Right ventricle myocardium inferior (tissue), 1 donor: ENCODE measurements at regions of chr5 and their contacts with region 1.

Region 1: DNA sequence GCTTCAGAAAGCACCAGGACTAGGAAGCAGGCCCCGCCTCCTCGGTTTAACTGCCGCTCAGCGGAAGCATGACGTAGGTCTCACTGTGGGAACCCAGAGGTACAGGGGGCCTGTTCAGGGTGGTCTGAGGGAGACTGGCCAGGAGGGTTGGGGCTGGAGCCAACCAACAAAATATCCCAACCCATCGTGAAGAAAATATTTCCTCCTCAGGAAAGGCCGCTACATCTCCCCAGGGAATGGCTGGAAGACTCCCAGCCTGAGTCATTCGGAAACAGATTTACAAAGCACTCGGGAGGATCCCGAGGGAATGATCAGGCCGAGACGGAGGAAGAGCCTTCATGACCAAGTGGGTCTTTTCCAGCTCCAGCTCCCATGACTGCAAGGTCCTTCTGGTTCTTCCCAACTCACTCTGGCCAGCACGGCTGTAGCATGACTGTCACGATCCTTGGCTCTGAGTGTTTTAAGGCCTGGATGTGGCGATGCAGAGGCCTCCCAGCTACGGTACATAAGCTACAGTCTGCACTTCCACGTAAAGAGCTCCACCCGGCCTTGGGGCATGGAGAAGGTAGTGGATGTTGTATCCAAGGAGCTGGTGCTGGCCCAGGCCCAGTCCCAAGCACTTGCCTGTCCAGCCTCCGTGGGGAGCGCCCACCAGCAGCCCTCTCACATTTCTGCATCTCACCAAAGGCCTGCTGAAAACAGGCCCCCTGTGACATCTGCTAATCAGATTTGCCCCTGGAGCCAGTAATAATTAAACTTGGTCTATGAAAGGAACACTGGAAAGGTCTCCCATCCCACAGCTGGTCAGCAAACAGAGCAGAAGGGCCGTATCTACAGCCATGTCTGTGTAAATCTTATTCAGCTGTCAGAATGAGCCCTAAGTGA is 100.6 kb downstream of the LHFPL2 start:
- DNase-seq: peak; percentile 92
- ATAC-seq: peak; percentile 94

Region 2: DNA sequence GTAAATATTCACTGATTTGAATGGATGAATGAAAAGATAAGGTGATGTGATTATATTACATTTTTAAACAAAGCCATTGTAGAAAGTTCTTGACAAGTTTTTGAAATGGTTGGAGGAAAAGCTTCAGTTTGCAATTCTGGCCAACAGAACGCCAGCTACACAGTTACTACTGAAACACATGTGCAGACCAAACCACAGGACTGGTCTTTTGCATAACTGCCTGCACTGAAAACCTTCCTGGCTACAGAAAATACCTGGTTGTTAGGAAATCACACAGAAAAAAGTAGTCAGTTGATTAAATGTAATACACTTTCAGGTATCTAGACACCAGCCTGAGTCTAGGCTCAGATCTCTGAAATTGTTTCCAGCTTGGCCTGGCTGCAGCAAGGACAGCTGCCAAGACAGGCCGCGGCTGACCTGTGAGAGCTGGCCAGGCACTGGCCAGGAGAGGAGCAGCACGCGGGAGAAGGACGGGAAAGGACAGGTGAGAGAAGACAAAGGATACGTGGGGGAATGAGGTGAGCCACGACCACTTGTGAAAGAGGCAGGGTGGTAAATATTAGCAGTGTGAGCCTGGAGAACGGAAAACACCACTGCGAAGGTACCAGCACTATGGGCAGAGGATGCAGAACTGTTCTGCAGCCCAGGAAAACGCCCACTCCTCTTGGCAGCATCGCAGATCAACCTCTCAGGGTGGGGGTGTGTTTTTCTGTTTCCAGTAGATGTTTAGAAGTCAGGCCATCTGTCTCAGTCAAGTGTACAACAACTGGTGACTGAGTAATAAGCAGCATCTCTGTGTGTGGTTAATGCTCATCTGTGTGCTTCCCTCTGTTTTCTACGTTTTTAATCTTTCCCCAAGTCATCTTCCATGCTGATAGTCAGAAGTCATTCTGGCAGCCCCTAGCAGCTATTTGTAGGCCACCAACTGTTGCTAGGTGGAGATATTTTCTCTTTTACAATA is 50.1 kb before region 1 on chr5:
- intact Hi-C with region 1: no loop called
- DNase-seq: no peak
- ATAC-seq: peak; percentile 54

Region 3: DNA sequence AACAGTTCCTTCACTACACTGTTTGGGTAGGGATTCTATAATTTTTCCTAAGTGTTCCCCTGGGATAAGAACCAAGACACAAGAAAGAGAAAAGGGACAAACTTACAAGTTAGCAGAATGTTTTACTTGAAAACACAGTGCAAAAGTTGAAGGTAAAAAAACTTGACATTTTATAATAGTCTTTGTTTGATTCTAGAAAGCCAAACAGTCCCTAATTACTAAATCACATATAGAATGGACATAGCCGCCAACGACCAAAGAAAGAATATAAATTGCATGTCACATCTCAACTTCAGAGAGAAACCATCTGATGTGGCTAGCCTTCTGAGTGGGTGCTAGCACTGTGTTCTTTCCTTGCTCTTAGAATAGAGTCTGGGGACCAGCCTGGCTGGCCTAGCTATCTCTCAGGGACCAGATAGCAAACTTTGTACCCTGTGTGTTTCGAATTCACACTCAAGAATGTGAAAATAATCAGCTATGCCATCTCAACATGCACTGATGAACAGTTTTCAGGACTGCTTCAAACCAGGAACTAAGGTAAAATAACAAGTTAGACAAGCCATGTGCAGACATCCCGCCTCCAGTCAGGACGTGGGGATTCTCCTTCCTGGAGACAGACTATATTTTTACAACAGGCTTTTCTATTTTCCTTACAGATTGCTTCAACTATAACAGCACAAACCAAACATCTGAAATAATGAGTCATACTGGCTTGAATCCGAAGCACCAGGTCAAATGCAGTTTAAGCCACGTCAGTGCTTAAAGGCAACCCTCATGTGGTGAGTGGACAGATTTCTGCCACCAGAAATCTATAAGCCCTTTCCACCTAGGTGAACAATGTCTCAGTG is 46.9 kb after region 1 on chr5:
- intact Hi-C with region 1: loop called (anchors 5 kb)
- DNase-seq: no peak
- ATAC-seq: peak; percentile 82

Region 4: DNA sequence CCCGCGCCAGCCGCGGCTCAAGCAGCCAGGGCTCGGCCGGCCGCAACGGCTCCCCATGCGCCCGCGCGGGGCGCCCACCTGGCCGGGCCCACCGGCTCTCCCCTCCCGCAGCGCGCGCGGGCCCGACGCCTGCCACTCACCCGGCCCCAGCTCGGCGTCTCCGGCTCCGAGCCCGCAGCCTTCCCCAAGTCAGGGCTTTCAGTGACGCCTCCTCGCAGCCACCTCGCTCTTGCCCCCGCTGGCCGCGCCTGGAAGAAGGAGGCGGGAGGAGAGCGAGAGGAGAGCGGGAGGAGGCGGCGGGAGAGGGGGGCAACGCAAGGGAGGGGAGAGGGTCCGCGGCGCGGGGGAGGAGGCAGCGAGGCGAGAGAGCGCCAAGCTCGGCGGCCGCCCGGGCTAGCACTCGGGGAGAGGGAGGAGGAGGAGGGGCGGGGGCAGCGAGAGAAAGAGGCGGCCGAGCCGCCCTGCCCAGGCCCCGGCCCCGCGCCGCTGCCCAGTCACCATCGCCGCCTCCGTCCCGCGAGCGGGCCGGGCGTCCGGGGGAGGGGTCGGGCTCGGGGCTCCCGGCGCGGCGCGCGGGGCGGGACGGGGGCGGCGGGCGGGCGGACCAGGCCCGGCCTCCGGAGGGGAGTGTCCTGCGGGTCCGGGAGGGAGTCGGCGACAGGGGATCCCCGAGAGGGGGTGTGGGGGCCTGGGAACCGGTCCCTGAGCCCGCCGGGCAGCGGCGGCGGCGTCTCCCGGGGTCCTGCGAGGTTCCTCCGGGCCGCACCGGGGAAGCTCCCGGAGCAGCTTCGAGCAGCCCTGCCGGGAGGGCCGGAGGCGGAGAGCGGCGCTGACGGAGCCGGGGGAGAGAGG is 100.6 kb after region 1 on chr5 and contains the start of gene LHFPL2:
- intact Hi-C with region 1: loop called (anchors 5 kb)
- DNase-seq: peak; percentile 91
- ATAC-seq: peak; percentile 91
- total RNA-seq, gene LHFPL2: 6.0 TPM

Region 5: GRCh38 chr5:78803353-78803752 is 255.4 kb after region 1 on chr5:
- intact Hi-C with region 1: loop called (anchors 10 kb)
- DNase-seq: peak; percentile 88
- ATAC-seq: peak; percentile 96